ENCODE measurements at regions of chr14 and their contacts with region 1.

Region 1: DNA sequence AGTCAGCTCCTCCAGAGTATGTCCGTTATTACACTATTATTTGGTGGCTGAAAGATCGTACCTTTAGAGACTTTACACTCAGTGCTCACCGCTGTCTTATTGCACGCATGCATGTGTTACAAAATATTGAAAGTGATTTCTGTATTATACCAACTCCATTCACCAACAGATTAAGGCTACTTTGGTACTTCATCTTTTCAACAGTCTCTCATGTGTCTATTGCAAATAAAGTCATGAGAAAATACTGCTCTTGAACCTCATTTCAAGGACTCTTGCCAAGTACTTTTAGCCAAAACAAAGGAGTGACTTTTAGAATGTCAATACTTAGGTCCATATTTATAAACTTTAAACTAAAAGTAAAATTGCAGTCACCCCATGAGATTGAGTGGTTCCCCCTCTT is 503.6 kb downstream of the TMEM121 start:
- DNase-seq: no peak
- H3K4me3 Mint-ChIP-seq: no peak overlapping the region
- H3K27ac Mint-ChIP-seq: no peak overlapping the region
- H3K4me1 Mint-ChIP-seq: peaks cover 32% of the 10 kb centered on the region
- H3K27me3 Mint-ChIP-seq: peaks cover 4% of the 10 kb centered on the region

Region 2: GRCh38 chr14:106013879-106014376 is 16.0 kb before region 1 on chr14:
- CTCF ChIA-PET with region 1: no interaction called
- POLR2A ChIA-PET with region 1: interaction called, 4 read pairs
- intact Hi-C with region 1: loop called (anchors 1 kb)
- DNase-seq: peak; percentile 69
- H3K4me3 Mint-ChIP-seq: peak overlapping the region; percentile 72
- H3K27ac Mint-ChIP-seq: peak overlapping the region; percentile 97
- H3K4me1 Mint-ChIP-seq: peaks cover 77% of the 10 kb centered on the region
- H3K27me3 Mint-ChIP-seq: no peaks in the 10 kb centered on the region

Region 3: GRCh38 chr14:106228541-106229158 is 198.7 kb after region 1 on chr14:
- CTCF ChIA-PET with region 1: no interaction called
- POLR2A ChIA-PET with region 1: no interaction called
- intact Hi-C with region 1: no loop called
- DNase-seq: peak; percentile 53
- H3K4me3 Mint-ChIP-seq: peak overlapping the region; percentile 58
- H3K27ac Mint-ChIP-seq: peak overlapping the region; percentile 72
- H3K4me1 Mint-ChIP-seq: peaks cover 45% of the 10 kb centered on the region
- H3K27me3 Mint-ChIP-seq: no peaks in the 10 kb centered on the region

Measured in activated CD4-positive, alpha-beta memory T cell treated with anti-CD3 and anti-CD28 coated beads for 36 hours (primary cell).